ENCODE measurements at regions of chr20 and their contacts with region 1.

Region 1: GRCh38 chr20:57709931-57710799 is at the start of gene PMEPA1:
- DNase-seq: peak; percentile 89 to 94
- ATAC-seq: peak; percentile 73 to 83
- H3K4me3 ChIP-seq: peak within 1 kb of the TSS; percentile 81
- H3K27ac ChIP-seq: peak within 1 kb of the TSS; percentile 97 to 98
- H3K4me1 ChIP-seq: peaks cover 64% of the 10 kb centered on the region
- CTCF ChIP-seq: no peak; the same call in 2 of the 3 replicates
- EP300 ChIP-seq: peak; percentile 50 to 69; a peak in 2 of 5 replicates
- POLR2A ChIP-seq: peak; percentile 64
- RAD21 ChIP-seq: peak; percentile 4 to 40; a peak in 3 of 5 replicates
- polyA plus RNA-seq, gene PMEPA1: 131 and 150 TPM in 2 replicates

Region 2: DNA sequence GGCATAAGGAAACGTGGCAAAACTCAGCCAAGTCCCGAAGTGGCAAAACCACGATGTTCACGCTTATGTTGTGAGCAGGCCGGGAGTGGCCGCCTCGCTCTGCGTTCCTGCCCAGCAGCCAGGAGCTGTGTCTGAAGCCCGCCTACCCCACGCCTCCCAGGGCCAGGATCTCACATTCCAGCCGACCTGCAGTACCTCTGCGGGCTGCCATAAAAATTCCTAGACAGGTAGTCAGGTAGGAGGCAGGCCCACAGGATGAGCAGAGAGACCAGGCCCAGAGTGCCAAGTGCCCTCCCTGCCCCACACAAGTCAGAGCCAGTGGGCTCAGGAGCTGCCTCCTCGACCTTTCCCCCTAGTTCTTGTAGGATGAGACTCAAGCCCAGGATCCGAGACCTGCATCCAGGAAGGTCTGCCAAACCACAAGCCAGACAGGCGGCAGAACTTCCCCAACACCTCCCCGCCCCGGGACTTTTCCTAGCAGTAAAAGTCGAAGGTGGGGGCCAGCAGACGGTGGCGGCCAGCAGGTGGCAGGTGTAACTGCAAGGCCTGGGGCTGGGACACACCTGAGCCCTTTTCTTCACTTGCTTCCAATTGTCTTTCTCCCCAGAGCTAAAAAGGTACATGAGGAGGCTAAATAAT is 17.0 kb before region 1 on chr20:
- CTCF ChIA-PET with region 1: interaction called, 27 read pairs
- POLR2A ChIA-PET with region 1: interaction called, 78 read pairs
- DNase-seq: no peak
- ATAC-seq: peak in 1 of 2 experiments; percentile 10; a peak in 3 of 6 replicates
- H3K4me3 ChIP-seq: no peak overlapping the region
- H3K27ac ChIP-seq: peak overlapping the region; percentile 92 to 97
- H3K4me1 ChIP-seq: peaks cover 100% of the 10 kb centered on the region
- CTCF ChIP-seq: peak; percentile 15; the same call in 1 of the 3 replicates
- EP300 ChIP-seq: no peak
- POLR2A ChIP-seq: no peak
- RAD21 ChIP-seq: no peak

Region 3: DNA sequence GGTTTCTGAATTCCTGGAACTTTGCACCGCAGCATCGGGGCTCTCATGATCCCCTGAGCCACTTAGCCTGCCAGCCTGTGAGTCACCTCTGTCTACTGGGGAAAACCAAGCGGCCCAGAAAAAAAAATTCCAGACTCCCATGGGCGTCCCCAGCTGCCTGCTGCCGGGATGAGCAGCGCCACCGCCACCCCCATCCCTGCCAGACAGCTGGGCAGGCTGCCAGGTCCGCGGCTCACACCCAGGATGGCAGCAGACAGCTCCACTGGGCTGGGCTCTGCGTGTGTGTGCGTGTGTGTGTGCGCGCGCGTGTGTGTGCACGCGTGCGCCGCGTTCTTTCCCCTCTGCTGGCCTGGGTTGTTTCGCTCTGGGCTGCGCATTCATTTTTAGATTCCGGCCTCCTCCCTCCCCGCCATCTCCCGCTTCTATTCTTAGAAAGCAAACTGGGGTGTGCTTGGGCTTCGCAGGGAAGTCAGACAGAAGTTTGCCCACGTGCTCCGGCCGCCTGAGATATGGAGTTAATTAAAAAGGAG is 38.5 kb after region 1 on chr20:
- CTCF ChIA-PET with region 1: interaction called, 5 read pairs
- POLR2A ChIA-PET with region 1: interaction called, 37 read pairs
- DNase-seq: peak; percentile 96 to 97
- ATAC-seq: peak; percentile 94
- H3K4me3 ChIP-seq: peak overlapping the region; percentile 24
- H3K27ac ChIP-seq: peak overlapping the region; percentile 98
- H3K4me1 ChIP-seq: peaks cover 54% of the 10 kb centered on the region
- CTCF ChIP-seq: 0 out of 3 replicates have a peak, but pooled peaks have one; percentile 7
- EP300 ChIP-seq: peak; percentile 85 to 92
- POLR2A ChIP-seq: no peak
- RAD21 ChIP-seq: peak; percentile 33 to 67; a peak in 4 of 5 replicates

Region 4: DNA sequence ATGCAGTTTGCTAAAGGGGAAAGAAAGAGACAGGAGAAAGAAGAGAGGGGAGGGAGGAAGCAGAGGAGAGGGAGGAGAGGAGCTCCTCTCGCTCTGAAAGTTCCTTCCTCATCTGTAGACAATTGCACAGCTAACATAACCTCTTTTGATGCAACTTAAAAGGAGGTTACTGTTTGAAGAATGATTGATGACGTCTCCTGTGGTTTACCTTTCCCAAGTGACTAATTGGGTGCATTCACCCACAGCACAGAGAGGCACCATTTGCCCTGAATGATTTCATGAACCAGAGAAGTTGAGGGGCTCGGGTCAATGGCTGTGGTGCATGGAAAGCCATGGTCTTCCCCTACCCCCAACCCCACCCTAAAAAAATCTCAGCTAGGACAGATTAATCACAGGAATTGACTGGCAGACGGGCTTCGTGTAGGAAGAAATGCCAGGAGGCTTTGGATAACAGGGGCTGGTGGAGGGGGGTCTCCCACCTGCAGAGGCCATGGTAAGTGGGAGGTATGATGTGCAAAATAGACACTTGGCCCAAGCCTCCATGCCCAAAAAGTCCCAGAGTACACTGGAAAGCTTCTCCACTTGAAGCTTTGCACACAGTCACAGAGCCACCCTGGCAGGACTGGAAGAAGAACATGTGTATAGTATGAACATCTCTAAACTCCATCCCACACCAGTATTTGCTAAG is 304.6 kb after region 1 on chr20:
- CTCF ChIA-PET with region 1: interaction called, 4 read pairs
- POLR2A ChIA-PET with region 1: interaction called, 11 read pairs
- DNase-seq: peak; percentile 81 to 89
- ATAC-seq: peak; percentile 44 to 45
- H3K4me3 ChIP-seq: no peak overlapping the region
- H3K27ac ChIP-seq: peak overlapping the region; percentile 93 to 97
- H3K4me1 ChIP-seq: peaks cover 66% of the 10 kb centered on the region
- CTCF ChIP-seq: no peak
- EP300 ChIP-seq: peak; percentile 94 to 96; a peak in 4 of 5 replicates
- POLR2A ChIP-seq: no peak
- RAD21 ChIP-seq: peak; percentile 33 to 62; a peak in 3 of 5 replicates

Region 5: DNA sequence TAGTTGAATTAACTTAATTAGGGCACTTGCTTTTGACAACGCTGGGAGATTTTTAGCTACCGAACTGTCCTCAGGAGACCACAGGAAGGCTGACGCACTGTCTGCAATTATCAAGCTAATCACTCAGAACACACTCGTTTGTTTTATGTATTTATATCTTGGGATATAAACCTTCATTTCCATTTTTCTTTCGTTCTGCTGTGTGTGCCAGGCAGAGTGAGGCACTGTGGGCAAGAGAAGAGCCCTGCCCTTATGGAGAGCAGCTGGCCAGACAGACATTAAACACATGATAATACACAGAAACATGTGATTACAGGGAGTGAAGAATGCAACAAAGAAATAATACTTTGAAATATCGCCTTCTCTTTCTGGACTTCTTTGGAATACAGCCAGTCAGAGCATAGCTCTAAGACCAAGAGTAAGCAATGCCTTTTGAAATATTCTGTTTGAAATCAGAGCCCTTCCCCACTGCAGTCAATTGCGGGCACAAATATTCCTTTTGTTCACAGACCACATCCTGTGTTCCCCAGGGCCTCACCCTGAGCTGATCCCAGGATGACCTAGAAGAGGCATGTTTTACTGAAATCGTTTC is 421.5 kb after region 1 on chr20:
- CTCF ChIA-PET with region 1: interaction called, 7 read pairs
- POLR2A ChIA-PET with region 1: interaction called, 10 read pairs
- DNase-seq: peak in 1 of 2 experiments; percentile 42
- ATAC-seq: peak in 1 of 2 experiments; percentile 59; a peak in 3 of 6 replicates
- H3K4me3 ChIP-seq: no peak overlapping the region
- H3K27ac ChIP-seq: peak overlapping the region; percentile 41 to 68; a peak in 4 of 6 replicates
- H3K4me1 ChIP-seq: peaks cover 30% of the 10 kb centered on the region
- CTCF ChIP-seq: no peak
- EP300 ChIP-seq: peak in 1 of 2 experiments; percentile 36; a peak in 1 of 5 replicates
- POLR2A ChIP-seq: no peak
- RAD21 ChIP-seq: no peak

Measured in A549 (cell line).